ENCODE measurements at regions of chr10 and their contacts with region 1.

Region 1: GRCh38 chr10:89553064-89553734 is 17.8 kb upstream of the SLC16A12 start:
- DNase-seq: peak; percentile 96
- H3K4me3 ChIP-seq: no peak overlapping the region
- H3K27ac ChIP-seq: no peak overlapping the region
- H3K4me1 ChIP-seq: peaks cover 14% of the 10 kb centered on the region
- H3K27me3 ChIP-seq: peaks cover 14% of the 10 kb centered on the region; the same call in 1 of the 2 replicates

Region 2: GRCh38 chr10:88974446-88975376 is 578.5 kb before region 1 on chr10:
- in situ Hi-C with region 1: no loop called
- DNase-seq: peak; percentile 56
- H3K4me3 ChIP-seq: peak overlapping the region; percentile 79
- H3K27ac ChIP-seq: peak overlapping the region; percentile 73
- H3K4me1 ChIP-seq: peaks cover 47% of the 10 kb centered on the region
- H3K27me3 ChIP-seq: no peaks in the 10 kb centered on the region

Region 3: DNA sequence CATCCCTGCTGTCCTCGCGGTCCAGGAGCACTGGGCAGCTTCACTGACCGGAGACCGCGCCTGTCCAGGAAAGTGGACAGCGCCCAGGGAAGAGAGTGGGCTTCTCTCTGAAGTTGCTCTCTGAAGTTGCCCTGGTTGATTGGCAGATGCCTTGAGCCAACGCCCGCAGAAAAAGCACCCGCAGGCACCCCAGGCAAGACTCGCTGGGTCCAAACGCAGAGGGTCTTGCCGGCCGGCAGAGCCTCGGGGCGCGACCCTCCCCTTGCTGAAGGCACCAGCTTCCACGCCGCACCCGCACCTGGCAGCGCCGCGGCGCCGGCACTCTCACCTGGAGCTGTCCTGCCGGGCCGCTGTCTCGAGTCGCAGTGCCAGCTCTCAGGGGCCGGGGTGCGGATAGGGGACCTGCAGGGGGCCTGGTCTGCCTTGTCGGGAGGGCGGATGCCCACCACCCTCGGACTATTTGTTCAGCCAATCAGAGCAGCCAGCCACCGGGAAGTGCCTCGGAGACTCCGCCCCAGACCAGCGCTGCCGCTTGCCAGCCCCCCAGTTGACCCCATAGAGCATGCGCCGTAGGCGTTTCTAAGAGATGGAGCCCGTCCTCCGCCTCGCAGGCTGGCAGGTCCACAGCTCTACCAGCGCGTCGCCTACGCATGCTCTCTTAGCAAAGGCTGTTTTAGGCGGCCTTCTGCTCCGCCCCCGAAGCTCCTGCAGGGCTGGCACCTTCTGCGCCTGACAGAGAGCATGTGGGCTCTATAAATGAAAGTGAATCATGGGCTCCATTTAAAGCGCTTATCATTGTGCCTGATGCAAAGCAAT is 301.6 kb before region 1 on chr10 and contains the start of gene LIPA:
- in situ Hi-C with region 1: loop called (anchors 10 kb)
- DNase-seq: peak; percentile 100
- H3K4me3 ChIP-seq: peak within 1 kb of the TSS; percentile 92
- H3K27ac ChIP-seq: no peak within 1 kb of the TSS; the same call in 1 of the 2 replicates
- H3K4me1 ChIP-seq: peaks cover 8% of the 10 kb centered on the region; the same call in 1 of the 2 replicates
- H3K27me3 ChIP-seq: no peaks in the 10 kb centered on the region
- total RNA-seq, gene LIPA: 109 and 113 TPM in 2 replicates

Region 4: DNA sequence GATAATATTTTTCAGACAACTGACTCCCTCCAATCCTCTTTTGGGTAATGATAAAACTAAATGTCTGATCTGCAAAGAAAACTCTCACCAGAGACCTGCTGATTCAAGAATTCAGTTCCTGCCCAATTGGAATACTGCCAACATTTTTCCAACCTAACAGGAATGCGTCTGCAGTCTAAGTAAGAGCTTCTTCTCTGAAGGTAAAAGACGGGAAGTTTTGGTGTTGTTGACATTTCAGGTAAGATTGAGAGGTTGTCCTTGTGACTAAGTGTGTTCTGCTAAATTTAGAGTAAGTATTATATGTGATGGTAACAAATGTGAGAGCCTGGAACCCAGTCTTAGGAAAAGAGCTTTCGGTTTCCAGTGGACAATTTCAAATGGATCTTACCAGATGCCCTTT is 121.2 kb before region 1 on chr10:
- in situ Hi-C with region 1: loop called (anchors 5 kb)
- DNase-seq: peak; percentile 38
- H3K4me3 ChIP-seq: no peak overlapping the region
- H3K27ac ChIP-seq: no peak overlapping the region
- H3K4me1 ChIP-seq: peaks cover 26% of the 10 kb centered on the region
- H3K27me3 ChIP-seq: no peaks in the 10 kb centered on the region